BJ (cell line): ENCODE measurements at regions of chr12 and their contacts with region 1.

Region 1: DNA sequence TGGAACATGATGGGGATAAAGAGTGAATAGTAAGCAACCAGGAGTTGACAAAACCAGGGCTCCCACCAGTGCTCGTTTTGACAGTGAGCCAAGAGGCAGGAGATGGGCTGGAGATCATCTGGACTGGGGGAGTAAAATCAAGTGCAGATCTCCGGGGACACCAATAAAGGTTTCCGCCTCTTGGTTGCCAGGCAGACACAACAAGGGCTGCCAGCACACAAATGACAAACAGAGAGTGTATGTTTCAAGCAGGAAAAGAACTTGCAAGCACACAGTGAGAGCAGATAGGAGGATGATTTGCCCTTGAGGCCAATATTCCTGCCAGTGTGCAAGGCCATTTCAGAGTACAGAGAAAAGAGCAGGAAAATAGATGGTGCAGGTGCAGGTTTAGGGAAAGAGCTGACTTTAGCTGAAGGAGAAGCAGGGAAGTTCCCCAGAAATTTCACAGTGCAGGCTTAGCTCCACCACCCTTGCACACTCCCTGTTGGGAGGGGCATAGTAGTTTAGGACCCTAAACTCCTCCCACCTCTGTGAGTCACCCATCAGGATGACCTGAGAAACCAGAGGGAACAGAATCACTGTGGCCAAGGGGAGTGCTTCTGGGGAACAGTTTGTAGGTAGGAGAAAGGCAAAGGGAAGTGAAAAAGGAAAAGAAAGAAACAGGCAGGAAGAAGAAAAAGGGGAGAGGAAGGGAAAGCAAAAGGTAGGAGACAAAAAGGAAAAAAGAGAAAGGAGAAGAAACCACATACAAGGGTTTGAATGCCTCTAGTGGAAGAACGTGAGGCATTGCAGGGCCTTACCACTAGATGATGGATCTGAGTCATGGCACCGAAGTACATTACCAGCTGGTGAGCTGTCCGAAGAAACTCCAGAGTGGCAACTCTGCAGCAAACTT is 404.4 kb downstream of the SLC6A15 start:
- DNase-seq: peak; percentile 46
- H3K4me3 ChIP-seq: no peak overlapping the region
- H3K27me3 ChIP-seq: no peaks in the 10 kb centered on the region
- CTCF ChIP-seq: peak; percentile 76

Region 2: DNA sequence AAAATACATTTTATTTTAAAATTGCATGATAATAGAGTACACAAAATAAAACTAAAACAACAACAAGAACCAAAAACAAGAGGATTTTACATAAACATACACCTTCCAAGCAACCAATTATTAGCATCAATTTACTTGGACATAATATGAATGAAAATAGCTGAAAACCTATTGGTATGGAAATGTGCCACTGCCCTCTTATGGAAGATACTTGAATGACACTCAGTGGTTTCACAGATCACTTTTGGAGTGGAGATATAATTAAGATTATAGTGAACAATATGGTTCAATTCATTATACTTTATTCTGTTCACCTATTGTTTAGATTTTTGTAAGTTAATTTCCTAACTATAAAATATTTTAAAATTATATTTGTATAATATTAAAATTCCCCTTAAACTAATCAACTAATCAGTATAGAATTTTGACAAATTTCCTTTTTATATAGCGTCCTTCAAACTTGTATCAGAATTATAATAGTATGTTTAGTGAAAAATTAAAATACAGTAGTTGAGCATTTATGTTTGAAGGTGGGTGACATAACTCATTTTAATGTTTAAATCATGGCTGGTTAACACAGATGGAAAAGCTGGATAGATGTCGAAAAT is 334.3 kb after region 1 on chr12:
- CTCF ChIA-PET with region 1: interaction called, 13 read pairs
- POLR2A ChIA-PET with region 1: no interaction called
- DNase-seq: peak; percentile 15
- H3K4me3 ChIP-seq: no peak overlapping the region
- H3K27me3 ChIP-seq: no peaks in the 10 kb centered on the region
- CTCF ChIP-seq: peak; percentile 72